Activated CD8-positive, alpha-beta T cell treated with anti-CD3 and anti-CD28 coated beads for 36 hours (primary cell): ENCODE measurements at regions of chr11 and their contacts with region 1.

Region 1: GRCh38 chr11:58675334-58676155 is 53.1 kb downstream of the CNTF start:
- DNase-seq: peak; percentile 84
- ATAC-seq: peak; percentile 86
- H3K4me3 Mint-ChIP-seq: no peak overlapping the region
- H3K27ac Mint-ChIP-seq: no peak overlapping the region
- H3K4me1 Mint-ChIP-seq: no peaks in the 10 kb centered on the region
- H3K27me3 Mint-ChIP-seq: peaks cover 2% of the 10 kb centered on the region
- CTCF ChIP-seq: peak; percentile 95

Region 2: GRCh38 chr11:58688789-58689503 is 13.4 kb after region 1 on chr11:
- CTCF ChIA-PET with region 1: interaction called, 11 read pairs
- POLR2A ChIA-PET with region 1: no interaction called
- intact Hi-C with region 1: no loop called
- DNase-seq: no peak
- ATAC-seq: no peak
- H3K4me3 Mint-ChIP-seq: no peak overlapping the region
- H3K27ac Mint-ChIP-seq: no peak overlapping the region
- H3K4me1 Mint-ChIP-seq: peaks cover 18% of the 10 kb centered on the region
- H3K27me3 Mint-ChIP-seq: no peaks in the 10 kb centered on the region
- CTCF ChIP-seq: no peak

Region 3: GRCh38 chr11:58788355-58789023 is 112.9 kb after region 1 on chr11:
- CTCF ChIA-PET with region 1: interaction called, 13 read pairs
- POLR2A ChIA-PET with region 1: no interaction called
- intact Hi-C with region 1: no loop called
- DNase-seq: peak; percentile 31
- ATAC-seq: peak; percentile 98
- H3K4me3 Mint-ChIP-seq: no peak overlapping the region
- H3K27ac Mint-ChIP-seq: no peak overlapping the region
- H3K4me1 Mint-ChIP-seq: peaks cover 2% of the 10 kb centered on the region
- H3K27me3 Mint-ChIP-seq: peaks cover 5% of the 10 kb centered on the region
- CTCF ChIP-seq: peak; percentile 86